ENCODE measurements at regions of chr20 and their contacts with region 1.

Region 1: DNA sequence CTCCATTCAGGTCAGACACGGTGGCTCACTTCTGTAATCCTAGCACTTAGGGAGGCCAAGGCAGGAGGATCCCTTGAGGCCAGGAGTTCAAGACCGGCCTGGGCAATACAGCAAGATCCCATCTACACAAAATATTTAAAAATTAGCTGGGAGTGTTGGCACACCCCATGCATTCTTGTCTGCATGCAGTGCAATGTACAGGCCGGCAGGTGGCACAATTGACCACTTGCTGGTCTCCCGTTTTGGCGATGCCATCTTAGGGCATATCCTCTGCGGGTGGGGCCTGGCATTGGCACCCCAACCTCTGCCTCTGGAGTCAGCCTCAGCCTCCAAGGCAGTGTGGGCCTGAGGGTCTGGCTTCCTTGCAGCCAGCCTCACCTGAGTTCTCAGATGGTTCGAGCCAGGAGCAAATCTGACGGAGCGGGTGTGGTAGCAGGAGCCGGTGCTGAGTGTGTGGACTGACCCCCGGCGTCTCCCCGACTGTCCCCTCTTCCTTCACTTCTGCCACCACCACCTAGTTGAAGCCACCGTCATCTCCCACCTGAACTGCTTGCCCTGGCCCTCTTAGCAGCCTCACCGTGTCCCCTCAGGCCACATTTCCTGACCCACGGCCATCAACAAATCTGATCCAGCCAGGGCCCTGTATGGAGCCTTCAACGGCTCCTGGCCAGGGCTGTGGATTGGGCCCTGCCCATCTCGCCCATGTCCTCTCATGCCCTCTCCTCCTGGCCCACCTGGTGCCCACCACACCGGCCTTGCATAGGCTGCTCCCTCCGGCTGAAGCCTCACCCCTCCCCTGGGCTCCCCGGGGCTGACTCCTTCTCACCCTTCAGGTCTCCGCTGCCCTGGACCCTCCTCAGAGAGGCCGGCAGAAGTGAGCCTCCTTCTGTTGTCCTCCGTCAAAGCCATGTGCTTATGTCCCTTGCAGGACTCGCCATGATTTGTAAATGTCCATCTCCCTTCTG is 44.0 kb downstream of the EFCAB8 start:
- DNase-seq: peak; percentile 62 to 91 (median 81)

Region 2: DNA sequence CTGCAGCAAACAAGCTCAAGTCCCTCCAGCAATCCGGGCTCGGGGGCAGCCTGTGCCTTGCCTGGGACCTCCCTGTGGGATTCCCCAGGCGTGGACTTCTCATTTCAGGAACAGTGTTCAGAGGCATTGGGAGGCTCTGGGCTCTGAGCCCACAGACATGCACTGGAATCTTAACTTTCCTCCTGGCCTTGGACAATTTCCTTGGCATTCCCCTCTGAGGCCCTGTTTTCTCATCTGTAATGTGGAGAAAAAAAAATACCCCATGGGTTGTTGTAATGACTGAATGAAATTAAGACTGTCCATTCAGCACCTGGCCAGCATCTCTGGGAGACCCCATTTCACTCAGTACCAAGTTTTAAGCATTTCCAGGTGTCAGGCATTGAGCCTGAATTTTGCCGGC is 194.3 kb after region 1 on chr20:
- intact Hi-C with region 1: loop called (anchors 2 kb)
- DNase-seq: peak in 2 of 42 donors; percentile 9 to 15

Region 3: GRCh38 chr20:33299111-33299603 is 396.4 kb after region 1 on chr20:
- intact Hi-C with region 1: loop called (anchors 10 kb)
- DNase-seq: peak; percentile 18 to 92 (median 77)

Measured in head of caudate nucleus (tissue), 42 donors.